Activated naive CD4-positive, alpha-beta T cell treated with anti-CD3 and anti-CD28 coated beads for 36 hours (primary cell): ENCODE measurements at regions of chr10 and their contacts with region 1.

Region 1: DNA sequence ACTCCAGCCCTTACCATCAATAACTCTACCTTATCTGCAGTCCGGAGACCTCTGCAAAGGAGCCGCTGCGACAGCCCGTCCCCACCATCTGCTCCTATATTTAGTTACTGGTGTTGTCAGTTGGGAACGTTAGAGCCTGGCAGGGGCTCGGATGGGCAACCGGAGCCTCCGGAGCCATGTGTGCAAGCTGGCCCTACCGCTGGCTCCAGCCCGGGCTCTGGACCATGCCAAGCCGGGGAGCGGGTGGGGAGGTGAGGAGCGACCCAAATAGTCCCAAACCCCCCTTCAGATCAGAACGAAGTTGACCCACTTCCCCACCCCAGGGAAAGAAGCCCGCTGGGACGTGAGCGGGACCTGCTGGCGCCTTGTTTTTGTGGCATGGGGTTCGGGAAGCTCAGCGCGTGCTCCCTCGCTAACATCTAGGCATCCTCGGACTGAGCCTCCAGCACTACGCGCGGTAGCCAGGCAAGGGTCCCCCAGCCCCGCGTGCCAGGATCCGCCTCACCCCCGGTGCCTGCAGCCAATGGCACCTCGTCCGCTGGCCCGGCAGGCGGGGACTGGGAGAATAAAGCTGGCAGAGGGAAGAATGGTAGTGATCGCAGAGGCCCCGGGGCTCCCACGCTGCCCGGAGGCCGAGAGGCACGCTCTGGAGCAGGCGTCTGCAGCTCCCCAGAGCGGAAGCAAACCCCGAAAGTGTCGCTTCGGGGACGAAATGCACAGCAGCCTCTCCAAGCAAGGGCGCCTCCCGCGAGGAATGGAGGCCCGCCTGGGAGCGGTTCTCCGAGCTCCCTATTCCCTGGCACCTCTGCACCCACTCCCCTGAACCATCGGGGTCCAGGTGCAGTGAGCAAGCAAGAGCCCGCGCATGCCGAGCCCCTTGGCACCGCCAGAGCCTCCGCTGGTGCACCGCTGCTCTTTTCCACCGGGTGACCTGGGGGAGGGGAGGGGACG is 679 bp downstream of the LRRC20 start:
- DNase-seq: peak; percentile 42
- H3K4me3 Mint-ChIP-seq: peak overlapping the region; percentile 84
- H3K27ac Mint-ChIP-seq: no peak overlapping the region
- H3K4me1 Mint-ChIP-seq: peaks cover 10% of the 10 kb centered on the region
- H3K27me3 Mint-ChIP-seq: peaks cover 2% of the 10 kb centered on the region

Region 2: DNA sequence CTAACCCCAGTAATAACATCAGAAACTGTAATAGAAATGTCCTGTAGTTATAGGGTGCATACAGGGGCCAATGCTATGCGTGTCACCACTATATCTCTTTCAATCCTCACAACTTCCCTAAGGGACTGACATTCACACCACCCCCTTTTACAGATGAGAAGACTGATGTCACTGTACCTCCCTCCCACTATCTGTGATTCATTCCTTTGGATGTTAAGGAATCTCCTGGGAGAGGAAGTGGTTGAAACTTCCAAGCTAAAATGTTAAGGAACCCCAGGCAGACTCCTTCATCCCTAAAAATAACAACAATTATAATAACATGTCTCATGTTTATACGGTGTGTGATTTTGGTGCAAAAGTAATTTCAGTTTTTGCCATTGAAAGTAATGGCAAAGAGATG is 574.6 kb before region 1 on chr10:
- CTCF ChIA-PET with region 1: no interaction called
- intact Hi-C with region 1: no loop called
- DNase-seq: no peak
- H3K4me3 Mint-ChIP-seq: no peak overlapping the region
- H3K27ac Mint-ChIP-seq: no peak overlapping the region
- H3K4me1 Mint-ChIP-seq: peaks cover under 1% of the 10 kb centered on the region
- H3K27me3 Mint-ChIP-seq: peaks cover 11% of the 10 kb centered on the region

Region 3: GRCh38 chr10:70169649-70170364 is 211.9 kb before region 1 on chr10:
- CTCF ChIA-PET with region 1: interaction called, 5 read pairs
- intact Hi-C with region 1: loop called (anchors 1 kb)
- DNase-seq: no peak
- H3K4me3 Mint-ChIP-seq: peak overlapping the region; percentile 87
- H3K27ac Mint-ChIP-seq: peak overlapping the region; percentile 90
- H3K4me1 Mint-ChIP-seq: peaks cover 66% of the 10 kb centered on the region
- H3K27me3 Mint-ChIP-seq: no peaks in the 10 kb centered on the region

Region 4: DNA sequence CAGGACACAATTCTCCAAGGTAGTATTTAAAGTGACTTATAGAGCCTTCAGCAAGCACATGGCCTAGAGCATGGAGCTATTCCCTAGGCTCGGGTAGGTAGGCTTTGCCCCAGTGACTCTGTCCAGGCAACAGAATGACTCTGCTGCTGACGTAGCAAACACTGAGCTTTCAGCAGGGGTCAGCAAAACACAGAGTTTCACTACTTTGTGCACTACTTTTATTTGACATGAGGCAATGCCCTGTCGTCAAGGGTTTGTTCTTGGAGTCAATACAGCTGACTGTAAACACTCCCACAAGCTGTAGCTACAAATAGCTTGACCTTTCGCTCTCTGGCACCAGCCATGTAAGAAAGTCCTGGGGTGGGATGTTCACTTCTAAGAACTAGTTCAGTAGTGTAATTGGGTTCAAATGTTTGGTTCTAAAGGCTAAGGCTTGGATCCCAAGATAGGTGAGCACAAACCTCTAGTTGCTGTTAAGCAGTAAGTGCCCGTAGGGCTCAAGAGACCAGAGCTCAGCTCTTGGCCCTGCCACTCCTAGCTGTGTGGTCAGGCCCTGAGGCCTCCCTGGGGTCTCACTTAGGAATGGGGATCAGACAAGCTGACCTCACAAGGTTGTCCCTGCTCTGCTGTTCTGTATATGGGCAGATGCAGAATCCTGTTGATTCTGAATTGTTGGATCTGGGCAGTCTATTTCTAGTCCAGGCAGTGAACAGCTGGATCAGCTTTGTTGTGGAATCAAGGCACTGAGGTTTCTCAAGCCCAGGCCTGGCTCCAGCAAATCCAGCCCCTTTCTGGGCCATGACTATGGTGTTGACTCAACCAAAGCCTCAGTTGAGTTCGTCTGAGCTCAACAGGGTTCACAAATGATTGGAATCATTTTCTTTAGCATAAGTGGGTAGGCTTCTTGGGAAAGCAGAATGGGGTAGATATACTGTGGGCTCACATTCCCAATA is 49.0 kb after region 1 on chr10:
- CTCF ChIA-PET with region 1: interaction called, 10 read pairs
- intact Hi-C with region 1: no loop called
- DNase-seq: no peak
- H3K4me3 Mint-ChIP-seq: no peak overlapping the region
- H3K27ac Mint-ChIP-seq: no peak overlapping the region
- H3K4me1 Mint-ChIP-seq: peaks cover 26% of the 10 kb centered on the region
- H3K27me3 Mint-ChIP-seq: no peaks in the 10 kb centered on the region

Region 5: GRCh38 chr10:70540089-70540788 is 158.5 kb after region 1 on chr10:
- CTCF ChIA-PET with region 1: interaction called, 4 read pairs
- intact Hi-C with region 1: loop called (anchors 1 kb)
- DNase-seq: peak; percentile 27
- H3K4me3 Mint-ChIP-seq: no peak overlapping the region
- H3K27ac Mint-ChIP-seq: no peak overlapping the region
- H3K4me1 Mint-ChIP-seq: no peaks in the 10 kb centered on the region
- H3K27me3 Mint-ChIP-seq: no peaks in the 10 kb centered on the region

Region 6: DNA sequence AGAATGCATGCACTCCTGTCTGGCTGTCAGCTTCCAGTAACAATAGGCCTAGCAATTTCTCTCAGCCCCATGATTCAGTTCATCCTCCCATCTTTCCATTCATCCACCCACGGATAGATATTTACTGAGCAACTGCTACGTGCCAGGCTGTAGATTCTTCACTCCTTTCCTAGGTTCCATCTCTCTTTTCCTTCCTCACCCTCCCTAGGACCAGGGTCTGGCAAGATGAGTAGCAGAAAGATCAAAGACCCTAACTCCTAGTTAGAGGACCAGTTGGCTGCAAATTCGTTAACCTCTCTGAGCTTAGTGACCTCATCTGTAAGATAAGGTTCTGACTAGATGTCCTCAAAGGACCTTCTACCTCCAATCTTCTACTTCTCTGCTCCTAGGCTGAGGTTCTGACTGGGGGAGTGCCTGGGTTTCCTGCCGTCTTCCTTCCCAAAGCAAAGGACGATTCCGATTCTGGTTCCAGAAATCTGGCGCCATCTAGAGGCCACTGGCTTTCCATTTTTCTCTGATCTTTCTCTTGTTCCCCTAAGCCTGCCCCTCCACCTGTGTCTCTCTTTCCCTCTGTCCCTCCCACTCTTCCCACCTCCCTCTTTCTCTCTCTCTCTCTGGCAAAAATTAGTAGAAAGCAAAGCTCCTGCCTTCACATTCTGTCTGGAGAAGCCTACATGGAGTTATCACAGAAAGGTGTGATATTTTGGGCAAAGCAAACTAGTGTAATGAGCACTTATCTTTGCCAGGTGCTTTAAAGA is 377.2 kb after region 1 on chr10:
- CTCF ChIA-PET with region 1: no interaction called
- intact Hi-C with region 1: loop called (anchors 10 kb)
- DNase-seq: peak; percentile 84
- H3K4me3 Mint-ChIP-seq: no peak overlapping the region
- H3K27ac Mint-ChIP-seq: no peak overlapping the region
- H3K4me1 Mint-ChIP-seq: peaks cover 7% of the 10 kb centered on the region
- H3K27me3 Mint-ChIP-seq: no peaks in the 10 kb centered on the region